ENCODE measurements at regions of chr10 and their contacts with region 1.

Region 1: GRCh38 chr10:93376372-93377293 is 105.5 kb downstream of the MYOF start:
- DNase-seq: peak; percentile 88
- H3K4me3 Mint-ChIP-seq: peak overlapping the region; percentile 55
- H3K27ac Mint-ChIP-seq: peak overlapping the region; percentile 87
- H3K4me1 Mint-ChIP-seq: peaks cover 40% of the 10 kb centered on the region
- H3K27me3 Mint-ChIP-seq: no peaks in the 10 kb centered on the region
- CTCF ChIP-seq: peak; percentile 85

Region 2: GRCh38 chr10:93420091-93420490 is 43.5 kb after region 1 on chr10:
- CTCF ChIA-PET with region 1: interaction called, 10 read pairs
- POLR2A ChIA-PET with region 1: interaction called, 4 read pairs
- intact Hi-C with region 1: loop called (anchors 2 kb)
- DNase-seq: no peak
- H3K4me3 Mint-ChIP-seq: no peak overlapping the region
- H3K27ac Mint-ChIP-seq: no peak overlapping the region
- H3K4me1 Mint-ChIP-seq: peaks cover 5% of the 10 kb centered on the region
- H3K27me3 Mint-ChIP-seq: no peaks in the 10 kb centered on the region
- CTCF ChIP-seq: no peak

Region 3: DNA sequence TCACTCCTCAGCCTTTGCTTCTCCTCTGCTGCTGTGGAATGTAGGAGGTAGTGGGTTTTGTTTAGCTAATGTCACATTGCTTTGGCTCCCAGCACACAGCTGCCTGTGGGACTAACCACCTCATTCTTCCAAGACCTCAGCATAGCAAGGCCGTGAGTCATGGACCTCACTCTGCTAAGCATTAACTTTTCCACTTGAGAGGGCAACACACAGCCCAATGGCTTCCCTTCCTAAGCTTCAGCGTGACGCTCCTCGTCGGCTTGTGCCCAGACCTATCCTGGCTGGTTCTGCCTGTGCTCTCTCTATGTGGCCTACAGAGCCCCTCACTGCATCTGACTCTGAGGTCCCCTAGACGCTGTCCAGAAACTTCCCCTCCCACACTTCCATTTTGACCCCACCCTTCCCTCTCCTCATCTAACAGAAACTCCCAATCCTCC is 82.2 kb after region 1 on chr10:
- CTCF ChIA-PET with region 1: interaction called, 38 read pairs
- POLR2A ChIA-PET with region 1: interaction called, 93 read pairs
- intact Hi-C with region 1: no loop called
- DNase-seq: peak; percentile 94
- H3K4me3 Mint-ChIP-seq: peak overlapping the region; percentile 67
- H3K27ac Mint-ChIP-seq: peak overlapping the region; percentile 98
- H3K4me1 Mint-ChIP-seq: peaks cover 41% of the 10 kb centered on the region
- H3K27me3 Mint-ChIP-seq: no peaks in the 10 kb centered on the region
- CTCF ChIP-seq: no peak

Region 4: DNA sequence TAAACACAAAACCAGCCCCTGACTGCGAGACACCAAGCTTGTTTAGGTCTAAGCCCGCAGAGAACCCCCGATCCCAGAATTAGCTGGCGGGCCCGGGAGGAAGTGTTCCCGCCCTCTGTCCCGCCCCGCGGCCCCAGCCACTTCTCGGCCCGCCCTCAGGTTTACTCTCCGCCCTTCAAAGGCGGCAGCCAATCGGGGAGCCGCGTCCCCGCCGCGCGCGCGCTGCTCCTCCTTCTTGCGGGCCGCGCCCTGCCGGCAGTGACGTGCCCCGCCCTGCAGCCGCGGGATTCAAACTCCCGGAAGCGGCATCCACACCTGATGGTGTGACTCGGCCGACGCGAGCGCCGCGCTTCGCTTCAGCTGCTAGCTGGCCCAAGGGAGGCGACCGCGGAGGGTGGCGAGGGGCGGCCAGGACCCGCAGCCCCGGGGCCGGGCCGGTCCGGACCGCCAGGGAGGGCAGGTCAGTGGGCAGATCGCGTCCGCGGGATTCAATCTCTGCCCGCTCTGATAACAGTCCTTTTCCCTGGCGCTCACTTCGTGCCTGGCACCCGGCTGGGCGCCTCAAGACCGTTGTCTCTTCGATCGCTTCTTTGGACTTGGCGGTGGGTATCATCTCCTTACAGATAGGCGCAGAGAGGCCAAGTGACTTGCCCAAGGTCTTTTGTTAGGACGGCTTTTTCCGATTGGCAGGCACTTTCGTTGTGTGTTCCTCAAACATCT is 119.8 kb after region 1 on chr10 and contains the start of gene CEP55:
- CTCF ChIA-PET with region 1: interaction called, 498 read pairs
- POLR2A ChIA-PET with region 1: interaction called, 18 read pairs
- intact Hi-C with region 1: loop called (anchors 5 kb)
- DNase-seq: peak; percentile 94
- H3K4me3 Mint-ChIP-seq: peak within 1 kb of the TSS; percentile 84
- H3K27ac Mint-ChIP-seq: peak within 1 kb of the TSS; percentile 73
- H3K4me1 Mint-ChIP-seq: peaks cover 24% of the 10 kb centered on the region
- H3K27me3 Mint-ChIP-seq: no peaks in the 10 kb centered on the region
- CTCF ChIP-seq: no peak
- total RNA-seq, gene CEP55: 25.2 and 39.4 TPM in 2 replicates

Region 5: DNA sequence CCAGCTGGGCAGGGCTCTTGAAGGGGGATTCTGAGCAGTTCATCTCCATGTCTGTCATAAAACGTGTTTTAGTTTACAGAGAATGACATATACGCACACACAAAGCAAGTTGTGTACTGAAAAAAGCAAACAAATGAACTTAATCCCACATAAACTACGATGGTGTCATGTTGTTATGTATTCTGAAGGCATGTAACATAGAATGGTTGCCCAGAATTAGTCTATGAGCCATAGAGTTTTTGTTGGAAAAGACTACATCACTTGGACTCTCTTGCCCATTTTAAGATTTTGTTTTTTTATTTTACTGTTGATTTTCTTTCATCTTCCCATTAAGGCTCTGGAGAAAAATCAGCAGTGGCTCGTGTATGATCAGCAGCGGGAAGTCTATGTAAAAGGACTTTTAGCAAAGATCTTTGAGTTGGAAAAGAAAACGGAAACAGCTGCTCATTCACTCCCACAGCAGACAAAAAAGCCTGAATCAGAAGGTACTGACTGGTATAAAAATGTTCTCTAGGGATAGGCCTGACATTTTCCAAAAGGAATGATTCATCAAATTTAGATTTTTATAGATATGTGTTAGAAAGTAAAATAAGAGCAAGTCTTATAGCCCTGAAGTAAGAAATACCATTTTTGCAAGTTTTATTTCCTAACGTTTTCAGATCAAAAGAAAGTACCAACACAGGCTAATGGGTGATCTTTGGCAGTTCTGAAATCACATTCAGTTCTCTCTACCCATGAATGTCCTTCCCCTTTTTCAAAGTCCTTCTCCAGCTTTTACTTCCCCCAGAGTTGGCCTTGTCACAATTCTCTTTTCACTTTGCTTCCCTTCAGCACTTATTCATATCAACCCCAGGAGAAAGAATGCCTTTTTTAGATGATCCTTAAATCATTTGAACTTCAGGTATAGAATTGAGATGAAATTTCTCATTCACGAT is 138.7 kb after region 1 on chr10:
- CTCF ChIA-PET with region 1: interaction called, 68 read pairs
- POLR2A ChIA-PET with region 1: no interaction called
- intact Hi-C with region 1: loop called (anchors 1 kb)
- DNase-seq: no peak
- H3K4me3 Mint-ChIP-seq: no peak overlapping the region
- H3K27ac Mint-ChIP-seq: peak overlapping the region; percentile 1
- H3K4me1 Mint-ChIP-seq: peaks cover 7% of the 10 kb centered on the region
- H3K27me3 Mint-ChIP-seq: no peaks in the 10 kb centered on the region
- CTCF ChIP-seq: no peak